ENCODE measurements at regions of chr15 and their contacts with region 1.

Region 1: DNA sequence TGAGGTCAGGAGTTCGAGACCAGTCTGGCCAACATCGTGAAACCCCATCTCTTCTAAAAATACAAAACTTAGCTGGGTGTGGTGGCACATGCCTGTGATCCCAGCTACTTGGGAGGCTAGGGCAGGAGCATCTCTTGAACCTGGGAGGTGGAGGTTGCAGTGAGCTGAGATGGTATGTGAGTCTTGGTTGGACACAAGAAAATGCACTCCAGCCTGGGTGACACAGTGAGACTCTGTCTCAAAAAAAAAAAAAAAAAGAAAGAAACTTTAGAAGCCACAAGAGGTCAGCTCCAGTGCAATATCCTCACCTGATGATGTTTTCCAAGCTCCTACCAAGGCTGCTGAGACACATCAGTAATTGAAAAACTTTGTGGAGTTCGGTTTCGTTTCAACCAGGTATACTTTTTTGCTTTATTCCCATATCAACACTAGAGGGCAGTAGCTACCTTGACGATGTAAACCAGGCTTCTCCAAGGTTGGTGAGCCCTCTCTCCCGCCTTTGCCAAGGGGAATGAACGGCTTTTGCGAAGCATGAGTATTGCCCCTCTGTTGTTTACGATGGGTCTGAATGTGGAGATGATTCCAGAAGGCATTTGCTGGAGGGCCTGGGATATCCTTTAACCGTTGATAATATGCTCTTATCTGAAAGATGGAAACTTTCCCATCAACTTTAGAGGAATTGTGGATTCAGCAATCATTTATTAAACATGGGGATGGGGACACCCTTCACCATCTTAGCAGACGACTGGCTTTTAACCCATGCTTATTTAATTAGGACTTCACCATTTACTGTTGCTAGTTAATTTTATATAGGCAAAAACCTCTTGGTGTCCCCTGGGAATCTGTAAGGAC is 202.8 kb downstream of the SV2B start:
- DNase-seq: no peak
- ATAC-seq: peak; percentile 75 to 86 (median 78)
- H3K4me3 ChIP-seq: no peak overlapping the region
- H3K27ac ChIP-seq: no peak overlapping the region
- H3K4me1 ChIP-seq: peaks cover 4% of the 10 kb centered on the region
- H3K27me3 ChIP-seq: peaks cover 0 to 10% (median 2%) of the 10 kb centered on the region in 3 donors
- CTCF ChIP-seq: peak; percentile 82

Region 2: GRCh38 chr15:91522663-91523332 is 220.0 kb after region 1 on chr15:
- intact Hi-C with region 1: loop called in 1 of 2 experiments (anchors 1 kb)
- DNase-seq: no peak
- ATAC-seq: peak in 2 of 4 donors; percentile 30 to 47
- H3K4me3 ChIP-seq: no peak overlapping the region
- H3K27ac ChIP-seq: no peak overlapping the region
- H3K4me1 ChIP-seq: no peaks in the 10 kb centered on the region
- H3K27me3 ChIP-seq: no peaks in the 10 kb centered on the region
- CTCF ChIP-seq: peak; percentile 55

Region 3: DNA sequence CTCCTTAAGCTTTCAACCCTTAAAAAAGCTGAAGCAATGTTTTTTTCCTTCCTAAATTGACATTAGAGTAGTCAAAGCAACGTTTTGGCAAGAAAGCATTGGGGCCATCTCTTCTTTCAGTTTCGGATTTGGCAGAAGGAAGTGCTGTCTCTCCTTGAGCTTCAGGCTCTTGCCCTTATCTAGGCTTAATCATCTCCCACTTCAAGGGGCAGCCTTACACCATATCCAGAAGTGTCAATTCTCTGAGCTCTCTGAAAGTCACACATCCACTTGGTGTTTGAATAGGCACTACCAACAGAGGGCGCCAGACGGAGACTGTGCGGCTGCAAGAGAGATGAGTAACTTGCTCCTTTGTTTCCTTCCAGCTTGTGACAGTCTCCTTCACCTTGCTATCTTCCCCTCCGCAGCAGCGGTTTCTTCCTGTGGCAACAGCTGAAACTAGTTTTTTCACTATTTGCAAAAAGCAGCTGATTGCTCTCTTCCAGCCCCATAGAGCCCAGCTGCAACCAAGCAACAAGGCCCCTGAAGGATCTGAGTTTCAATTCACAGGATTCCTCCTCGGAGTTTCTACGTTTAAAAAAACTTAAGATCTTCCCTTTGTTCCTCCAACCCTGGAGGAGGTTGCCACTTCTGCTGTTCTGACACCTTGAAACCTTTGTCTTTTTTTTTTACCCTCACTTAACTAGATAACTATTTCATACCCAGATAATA is 403.7 kb after region 1 on chr15:
- intact Hi-C with region 1: loop called in 1 of 2 experiments (anchors 5 kb)
- DNase-seq: peak; percentile 74 to 76
- ATAC-seq: peak; percentile 64 to 76 (median 72)
- H3K4me3 ChIP-seq: no peak overlapping the region
- H3K27ac ChIP-seq: no peak overlapping the region
- H3K4me1 ChIP-seq: no peaks in the 10 kb centered on the region
- H3K27me3 ChIP-seq: peaks cover 0 to 3% (median 0%) of the 10 kb centered on the region in 3 donors
- CTCF ChIP-seq: peak; percentile 78

Region 4: GRCh38 chr15:91852741-91853510 is 550.1 kb after region 1 on chr15:
- intact Hi-C with region 1: loop called (anchors 2 to 5 kb)
- DNase-seq: peak; percentile 78 to 90
- ATAC-seq: peak; percentile 85 to 90 (median 89)
- H3K4me3 ChIP-seq: peak overlapping the region; percentile 81
- H3K27ac ChIP-seq: peak overlapping the region; percentile 78
- H3K4me1 ChIP-seq: peaks cover 10% of the 10 kb centered on the region
- H3K27me3 ChIP-seq: no peaks in the 10 kb centered on the region
- CTCF ChIP-seq: peak; percentile 74

Region 5: DNA sequence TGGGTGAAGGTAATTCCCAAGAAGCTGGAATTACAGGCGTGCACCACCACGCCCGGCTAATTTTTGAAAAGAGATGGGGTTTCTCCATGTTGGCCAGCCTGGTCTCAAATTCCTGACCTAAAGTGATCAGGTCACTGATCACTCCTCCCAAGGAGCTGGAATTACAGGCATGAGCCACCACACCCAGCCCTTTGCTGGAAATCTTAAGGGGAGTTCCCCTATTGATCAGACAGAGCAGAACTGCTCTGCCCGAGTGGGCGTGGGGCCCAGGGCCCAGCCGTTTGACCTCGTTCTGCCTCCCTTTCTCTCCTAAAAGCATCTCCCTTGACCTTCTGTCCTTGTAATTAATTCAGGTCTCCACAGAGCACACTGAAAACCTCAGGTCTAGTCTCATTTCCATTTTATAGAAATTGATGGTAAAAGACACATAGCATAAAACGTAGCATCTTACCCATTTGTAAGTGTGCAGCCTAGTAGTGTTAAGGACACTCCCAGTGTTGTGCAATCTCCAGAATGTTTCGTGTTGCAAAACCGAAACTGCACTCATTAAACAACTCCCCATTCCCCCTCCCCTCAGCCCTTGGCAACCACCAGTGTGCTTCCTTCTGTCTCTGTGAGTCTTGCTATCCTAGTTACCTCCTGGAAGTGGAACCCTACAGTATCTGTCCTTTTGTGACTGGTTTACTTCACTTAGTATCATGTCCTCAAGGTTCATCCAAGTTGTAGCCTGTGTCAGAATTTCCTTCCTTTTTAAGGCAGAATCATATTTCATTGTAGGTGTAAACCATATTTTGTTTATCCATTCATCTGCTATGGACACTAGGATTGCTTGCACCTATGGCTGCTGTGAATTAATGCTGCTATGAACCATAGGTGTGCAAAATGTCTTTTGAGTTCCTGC is 640.1 kb after region 1 on chr15:
- intact Hi-C with region 1: loop called in 1 of 2 experiments (anchors 10 kb)
- DNase-seq: peak; percentile 82 to 85
- ATAC-seq: peak; percentile 70 to 90 (median 82)
- H3K4me3 ChIP-seq: peak overlapping the region; percentile 37
- H3K27ac ChIP-seq: peak overlapping the region; percentile 34
- H3K4me1 ChIP-seq: peaks cover 48% of the 10 kb centered on the region
- H3K27me3 ChIP-seq: no peaks in the 10 kb centered on the region
- CTCF ChIP-seq: no peak

Region 6: DNA sequence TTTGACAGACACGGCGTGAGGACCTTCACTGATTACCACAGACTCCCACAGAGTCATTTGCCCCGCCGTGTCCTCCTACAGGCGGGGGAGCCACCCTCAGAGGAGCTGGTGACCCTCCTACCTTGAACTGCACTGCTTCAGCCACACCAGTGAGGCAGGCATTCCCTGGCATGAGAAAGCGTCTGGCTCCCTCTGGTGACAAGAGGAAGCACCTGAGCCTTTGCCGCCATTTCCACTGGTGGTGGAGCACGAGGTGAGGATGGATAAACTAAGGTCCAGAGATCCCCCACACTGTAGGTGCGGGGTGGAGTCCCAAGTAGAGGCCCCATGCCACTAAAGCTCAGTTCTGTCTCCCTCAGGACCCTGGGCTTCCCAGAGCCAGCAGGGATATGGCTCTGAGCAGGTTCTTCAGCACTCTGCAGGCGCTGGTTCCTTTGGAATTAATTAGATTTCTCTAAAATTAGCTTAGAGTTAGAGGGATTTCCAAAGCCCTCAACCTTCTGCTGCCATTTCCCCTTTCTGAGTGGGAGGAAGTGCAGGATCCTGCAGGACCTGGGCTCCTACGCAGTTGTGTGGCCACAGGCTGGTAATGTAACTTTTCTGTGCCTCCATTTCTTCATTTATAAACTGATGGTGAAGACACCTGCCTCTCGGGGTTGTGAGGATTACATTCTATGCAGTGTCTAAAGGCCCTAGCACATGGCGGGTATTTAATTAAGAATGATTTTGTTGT is 774.7 kb after region 1 on chr15:
- intact Hi-C with region 1: loop called (anchors 2 to 5 kb)
- DNase-seq: peak; percentile 65 to 75
- ATAC-seq: peak; percentile 73 to 84 (median 80)
- H3K4me3 ChIP-seq: no peak overlapping the region
- H3K27ac ChIP-seq: no peak overlapping the region
- H3K4me1 ChIP-seq: peaks cover 10% of the 10 kb centered on the region
- H3K27me3 ChIP-seq: peaks cover 0 to 1% (median 0%) of the 10 kb centered on the region in 3 donors
- CTCF ChIP-seq: peak; percentile 73

Measured in psoas muscle (tissue), 8 donors.